A673 (cell line): ENCODE measurements at regions of chr9 and their contacts with region 1.

Region 1: DNA sequence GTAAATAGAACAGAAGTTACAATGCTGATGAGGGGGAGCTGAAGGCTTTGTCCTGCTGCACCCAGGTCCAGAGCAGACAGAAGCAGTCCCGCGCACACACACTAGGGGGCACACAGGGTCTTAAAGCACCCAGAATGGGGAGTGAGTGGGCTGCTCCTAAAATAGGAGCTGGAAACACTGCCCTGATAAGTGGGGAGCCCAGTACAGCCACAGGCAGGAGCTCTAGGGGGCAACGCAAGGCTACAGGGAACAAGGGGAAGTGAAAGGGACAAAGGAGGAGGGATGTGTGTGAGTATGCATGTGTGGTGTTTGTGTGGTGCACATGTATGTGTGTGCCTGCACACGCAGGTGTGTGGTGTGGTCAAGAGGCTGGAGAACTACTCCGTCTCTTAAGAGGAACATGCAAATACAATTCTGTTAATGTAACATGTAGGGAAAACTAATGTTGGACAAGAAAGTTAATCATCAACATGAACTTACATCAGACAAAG is 191.5 kb downstream of the ROR2 start:
- DNase-seq: peak; percentile 80
- H3K4me3 ChIP-seq: no peak overlapping the region
- H3K27ac ChIP-seq: no peak overlapping the region
- H3K4me1 ChIP-seq: no peaks in the 10 kb centered on the region
- H3K27me3 ChIP-seq: no peaks in the 10 kb centered on the region
- CTCF ChIP-seq: peak; percentile 88

Region 2: DNA sequence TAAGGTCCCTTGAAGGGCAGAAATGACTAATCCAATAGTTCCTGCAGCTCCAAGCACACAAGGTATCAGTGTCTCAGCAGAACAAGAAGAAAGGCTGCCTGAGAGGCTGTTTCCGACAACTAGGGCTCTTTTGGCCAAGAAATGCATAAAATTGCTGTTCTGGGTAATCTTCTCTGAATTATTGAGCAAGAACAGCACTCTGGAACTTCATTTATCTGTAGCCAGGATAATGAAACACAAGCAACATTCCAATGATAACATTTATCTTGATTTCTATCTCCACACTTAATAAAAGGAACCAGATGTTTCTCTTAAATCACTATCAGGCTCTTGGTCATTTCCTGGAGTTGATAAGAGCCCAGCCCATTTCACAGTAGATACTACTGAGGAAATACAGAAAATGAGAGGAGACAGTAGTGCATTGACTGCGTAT is 379.8 kb before region 1 on chr9:
- CTCF ChIA-PET with region 1: no interaction called
- POLR2A ChIA-PET with region 1: no interaction called
- intact Hi-C with region 1: no loop called
- DNase-seq: peak; percentile 27
- H3K4me3 ChIP-seq: no peak overlapping the region
- H3K27ac ChIP-seq: no peak overlapping the region
- H3K4me1 ChIP-seq: no peaks in the 10 kb centered on the region
- H3K27me3 ChIP-seq: no peaks in the 10 kb centered on the region
- CTCF ChIP-seq: no peak

Region 3: DNA sequence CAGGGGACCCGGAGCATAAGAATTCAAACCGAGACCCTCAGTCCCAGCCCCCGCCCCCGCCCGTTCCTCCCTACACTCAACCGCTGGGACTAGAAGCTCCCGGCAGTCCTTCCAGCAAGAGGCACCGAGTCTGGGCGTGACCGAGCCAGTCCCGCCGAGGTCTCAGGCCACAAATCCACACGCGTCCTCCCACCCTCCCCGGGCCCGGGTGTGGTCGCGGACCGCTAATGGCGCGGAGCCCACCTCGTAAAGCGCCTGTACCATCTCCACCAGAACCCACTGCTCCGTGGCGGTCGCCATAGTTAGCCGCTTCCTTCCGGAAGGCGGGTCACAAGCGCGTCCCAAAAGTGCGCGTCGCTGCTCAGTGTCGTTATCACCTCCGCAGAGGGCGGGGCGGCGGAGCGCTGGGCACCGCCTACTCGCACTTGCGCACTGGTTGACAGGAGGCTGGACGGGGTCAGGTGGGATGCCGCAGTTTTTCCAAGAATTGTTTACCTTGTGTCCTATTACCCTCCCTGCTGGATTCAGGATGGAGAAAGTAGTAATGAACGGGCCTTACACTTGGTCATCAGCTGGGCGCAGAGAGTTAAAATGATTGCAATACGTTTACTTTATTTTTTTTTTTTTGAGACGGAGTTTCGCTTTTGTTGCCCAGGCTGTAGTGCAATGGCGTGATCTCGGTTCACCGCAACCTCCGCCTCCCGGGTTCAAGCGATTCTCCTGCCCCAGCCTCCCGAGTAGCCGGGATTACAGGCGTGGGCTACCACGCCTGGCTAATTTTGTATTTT is 356.7 kb after region 1 on chr9 and contains the start of gene SPTLC1:
- CTCF ChIA-PET with region 1: interaction called, 14 read pairs
- POLR2A ChIA-PET with region 1: no interaction called
- intact Hi-C with region 1: no loop called
- DNase-seq: peak; percentile 94
- H3K4me3 ChIP-seq: peak within 1 kb of the TSS; percentile 86
- H3K27ac ChIP-seq: peak within 1 kb of the TSS; percentile 88
- H3K4me1 ChIP-seq: peaks cover 10% of the 10 kb centered on the region
- H3K27me3 ChIP-seq: no peaks in the 10 kb centered on the region
- CTCF ChIP-seq: no peak
- total RNA-seq, gene SPTLC1: 60.6 and 62.1 TPM in 2 replicates